Gastrocnemius medialis (tissue), 4 donors: ENCODE measurements at regions of chr2 and their contacts with region 1.

Region 1: GRCh38 chr2:64586883-64587481 is 62.9 kb downstream of the AFTPH start:
- DNase-seq: no peak
- ATAC-seq: peak; percentile 72 to 82
- H3K4me3 ChIP-seq: no peak overlapping the region
- H3K27ac ChIP-seq: no peak overlapping the region
- H3K4me1 ChIP-seq: no peaks in the 10 kb centered on the region
- H3K27me3 ChIP-seq: no peaks in the 10 kb centered on the region
- CTCF ChIP-seq: peak; percentile 23 to 56 (median 48)
- POLR2A ChIP-seq: no peak

Region 2: GRCh38 chr2:64504774-64505720 is 81.9 kb before region 1 on chr2:
- in situ Hi-C with region 1: no loop called
- intact Hi-C with region 1: no loop called
- DNase-seq: no peak
- ATAC-seq: no peak
- H3K4me3 ChIP-seq: no peak overlapping the region
- H3K27ac ChIP-seq: no peak overlapping the region
- H3K4me1 ChIP-seq: no peaks in the 10 kb centered on the region
- H3K27me3 ChIP-seq: no peaks in the 10 kb centered on the region
- CTCF ChIP-seq: no peak
- POLR2A ChIP-seq: no peak

Region 3: GRCh38 chr2:64865073-64865830 is 278.3 kb after region 1 on chr2:
- in situ Hi-C with region 1: loop called in 2 of 4 experiments (anchors 10 to 25 kb)
- intact Hi-C with region 1: loop called (anchors 1 kb)
- DNase-seq: peak; percentile 39 to 58
- ATAC-seq: peak; percentile 90 to 91
- H3K4me3 ChIP-seq: peak overlapping the region; percentile 77 to 80 (median 78)
- H3K27ac ChIP-seq: peak overlapping the region; percentile 77 to 87 (median 84)
- H3K4me1 ChIP-seq: peaks cover 5 to 23% of the 10 kb centered on the region in 2 donors
- H3K27me3 ChIP-seq: no peaks in the 10 kb centered on the region
- CTCF ChIP-seq: peak; percentile 48 to 99 (median 98)
- POLR2A ChIP-seq: no peak

Region 4: DNA sequence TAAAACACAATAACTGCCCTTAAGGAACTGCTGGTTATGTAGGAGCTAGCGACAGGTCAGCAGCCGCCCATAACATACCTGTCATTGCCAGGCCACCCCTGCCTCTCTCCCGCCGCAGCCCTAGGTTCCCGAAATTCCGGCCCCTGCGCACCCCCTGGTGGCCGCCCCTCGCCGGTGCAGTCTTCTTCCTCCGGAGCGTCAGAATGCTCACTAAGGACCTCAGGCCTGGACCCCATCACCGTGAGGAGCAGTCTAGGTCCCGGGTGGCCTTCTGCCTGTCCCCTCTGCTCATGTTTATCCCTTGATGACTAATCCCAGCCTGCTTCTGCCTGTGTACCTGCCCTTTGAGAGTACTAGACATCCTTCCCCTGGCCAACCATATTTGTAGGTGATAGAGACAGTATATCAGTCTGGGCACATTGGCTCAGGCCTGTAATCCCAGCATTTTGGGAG is 286.5 kb after region 1 on chr2:
- in situ Hi-C with region 1: loop called in 2 of 4 experiments (anchors 10 to 25 kb)
- intact Hi-C with region 1: loop called (anchors 1 kb)
- DNase-seq: peak in 1 of 2 donors; percentile 68
- ATAC-seq: peak; percentile 83 to 90
- H3K4me3 ChIP-seq: peak overlapping the region; percentile 14 to 50 (median 36)
- H3K27ac ChIP-seq: no peak overlapping the region
- H3K4me1 ChIP-seq: peaks cover 0 to 7% of the 10 kb centered on the region in 2 donors
- H3K27me3 ChIP-seq: no peaks in the 10 kb centered on the region
- CTCF ChIP-seq: peak; percentile 90 to 98 (median 92)
- POLR2A ChIP-seq: no peak

Region 5: GRCh38 chr2:65024149-65024829 is 437.3 kb after region 1 on chr2:
- in situ Hi-C with region 1: loop called in 1 of 4 experiments (anchors 25 kb)
- intact Hi-C with region 1: loop called (anchors 10 kb)
- DNase-seq: no peak
- ATAC-seq: no peak
- H3K4me3 ChIP-seq: no peak overlapping the region
- H3K27ac ChIP-seq: no peak overlapping the region
- H3K4me1 ChIP-seq: no peaks in the 10 kb centered on the region
- H3K27me3 ChIP-seq: no peaks in the 10 kb centered on the region
- CTCF ChIP-seq: no peak
- POLR2A ChIP-seq: no peak

Region 6: DNA sequence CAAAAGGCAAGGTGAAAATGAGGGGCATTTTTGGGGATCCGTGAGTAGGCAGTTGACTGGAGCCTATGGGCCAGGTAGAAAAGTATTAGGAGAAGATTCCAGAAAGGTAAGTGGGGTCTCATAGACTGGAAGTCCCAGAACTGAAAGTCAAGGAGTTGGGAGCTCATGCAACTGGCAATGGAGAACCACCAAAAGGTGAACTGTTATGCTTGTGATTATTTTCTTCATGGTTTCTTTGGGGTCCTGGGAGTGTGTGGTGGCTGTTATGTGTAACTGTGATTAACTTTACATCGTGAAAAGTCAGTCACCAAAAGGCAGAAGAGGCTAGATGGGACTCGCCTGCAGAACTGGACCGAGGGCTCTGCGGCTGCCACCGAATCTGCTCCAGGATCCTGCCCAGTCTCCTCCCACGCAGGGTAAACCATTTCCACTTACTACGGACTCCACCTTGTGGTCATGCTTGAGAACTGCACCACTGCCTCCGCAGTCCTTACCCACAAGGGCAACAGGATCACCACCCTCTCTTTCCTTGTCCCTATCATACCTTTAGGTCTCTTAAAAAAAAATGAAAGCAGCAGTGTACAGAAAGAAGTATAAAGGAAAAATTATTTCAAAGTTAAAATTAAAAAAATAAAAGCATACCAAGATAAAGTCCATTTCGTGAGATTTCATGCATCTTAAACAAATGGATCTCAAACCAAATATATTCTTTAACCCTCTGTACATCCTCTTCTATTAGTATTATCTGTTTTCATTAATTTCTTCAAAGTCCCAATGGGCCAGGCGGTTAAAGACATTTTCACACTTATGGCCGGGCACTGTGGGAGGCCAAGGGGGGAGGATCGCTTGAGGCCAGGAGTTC is 453.6 kb after region 1 on chr2:
- in situ Hi-C with region 1: loop called in 1 of 4 experiments (anchors 25 kb)
- intact Hi-C with region 1: no loop called
- DNase-seq: peak; percentile 78 to 86
- ATAC-seq: peak; percentile 97
- H3K4me3 ChIP-seq: peak overlapping the region in 1 of 4 donors; percentile 37
- H3K27ac ChIP-seq: no peak overlapping the region
- H3K4me1 ChIP-seq: peaks cover 0 to 5% of the 10 kb centered on the region in 2 donors
- H3K27me3 ChIP-seq: no peaks in the 10 kb centered on the region
- CTCF ChIP-seq: peak; percentile 94 to 98 (median 95)
- POLR2A ChIP-seq: no peak